Motor neuron (in vitro differentiated cells): ENCODE measurements at regions of chr1 and their contacts with region 1.

Region 1: GRCh38 chr1:44405041-44405797 is at the start of gene RNF220:
- ATAC-seq: peak; percentile 65 to 91 (median 87)
- H3K4me3 ChIP-seq: peak within 1 kb of the TSS; percentile 48 to 75 (median 65)
- H3K27ac ChIP-seq: peak within 1 kb of the TSS; percentile 65 to 81
- H3K4me1 ChIP-seq: peaks cover 10 to 17% of the 10 kb centered on the region in 2 donors
- total RNA-seq, gene RNF220: 47.3 to 134 (median 92.0) TPM

Region 2: GRCh38 chr1:44631647-44632539 is 226.7 kb after region 1 on chr1:
- in situ Hi-C with region 1: loop called in 4 of 9 experiments (anchors 25 kb)
- ATAC-seq: peak; percentile 71 to 83 (median 78)
- H3K4me3 ChIP-seq: peak overlapping the region; percentile 41 to 81 (median 45)
- H3K27ac ChIP-seq: peak overlapping the region; percentile 86 to 87
- H3K4me1 ChIP-seq: peaks cover 37 to 42% of the 10 kb centered on the region in 2 donors